WTC11 (cell line): ENCODE measurements at regions of chr2 and their contacts with region 1.

Region 1: DNA sequence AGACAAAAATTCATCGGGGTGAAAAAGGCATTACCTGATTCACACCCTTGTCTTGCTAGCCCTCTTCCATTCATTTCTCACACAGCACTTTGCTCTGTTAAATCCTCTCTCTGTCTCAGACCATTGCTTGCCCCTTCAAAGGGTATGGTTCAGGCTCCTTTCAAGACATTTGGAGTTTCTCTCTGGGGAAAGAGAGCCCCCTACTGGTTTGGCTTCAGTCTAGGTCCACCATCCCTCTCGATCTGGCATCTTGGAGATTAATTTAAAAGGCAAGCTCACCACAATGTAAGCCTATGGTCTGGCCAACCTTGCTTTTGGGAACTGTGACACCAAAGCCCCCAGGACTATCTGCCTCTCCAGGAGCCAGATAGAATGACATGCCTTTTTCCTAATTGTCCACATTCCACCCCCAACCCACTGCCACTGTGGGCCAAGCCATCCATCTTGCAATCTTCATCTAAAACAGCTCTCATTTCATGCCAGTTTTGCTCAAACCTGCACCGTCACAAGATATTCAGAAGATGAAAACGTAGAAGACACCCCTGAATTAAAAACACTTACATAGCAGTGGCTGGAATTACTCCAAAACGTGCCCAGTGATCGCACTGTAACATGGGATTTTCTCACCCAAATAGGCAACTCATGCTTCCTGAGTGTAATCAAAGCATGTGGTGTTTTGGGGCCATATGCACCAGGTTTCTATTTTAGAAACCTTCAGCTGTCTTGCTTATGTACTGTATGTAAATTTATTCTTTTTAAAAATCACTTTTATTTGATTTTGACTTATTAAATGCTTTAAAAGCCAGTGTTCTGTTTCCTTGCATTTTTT is 93.9 kb downstream of the FARSB start:
- DNase-seq: peak; percentile 56
- ATAC-seq: peak; percentile 93
- H3K4me3 Mint-ChIP-seq: no peak overlapping the region
- H3K27ac Mint-ChIP-seq: no peak overlapping the region
- H3K4me1 Mint-ChIP-seq: no peaks in the 10 kb centered on the region
- H3K27me3 Mint-ChIP-seq: peaks cover 15% of the 10 kb centered on the region
- CTCF ChIP-seq: peak; percentile 76

Region 2: GRCh38 chr2:222038067-222038802 is 523.8 kb before region 1 on chr2:
- CTCF ChIA-PET with region 1: interaction called, 12 read pairs
- POLR2A ChIA-PET with region 1: no interaction called
- DNase-seq: no peak
- ATAC-seq: no peak
- H3K4me3 Mint-ChIP-seq: no peak overlapping the region
- H3K27ac Mint-ChIP-seq: no peak overlapping the region
- H3K4me1 Mint-ChIP-seq: 0 out of 2 replicates have a peak, but pooled peaks cover 2% of the 10 kb centered on the region
- H3K27me3 Mint-ChIP-seq: peaks cover 12% of the 10 kb centered on the region
- CTCF ChIP-seq: no peak